ENCODE measurements at regions of chr3 and their contacts with region 1.

Region 1: GRCh38 chr3:62665598-62666437 is 209.4 kb downstream of the CADPS start:
- DNase-seq: peak; percentile 63 to 80 (median 76)
- ATAC-seq: peak; percentile 61 to 82
- H3K4me3 ChIP-seq: no peak overlapping the region
- H3K27ac ChIP-seq: peak overlapping the region; percentile 53
- H3K4me1 ChIP-seq: no peaks in the 10 kb centered on the region
- H3K27me3 ChIP-seq: no peaks in the 10 kb centered on the region

Region 2: DNA sequence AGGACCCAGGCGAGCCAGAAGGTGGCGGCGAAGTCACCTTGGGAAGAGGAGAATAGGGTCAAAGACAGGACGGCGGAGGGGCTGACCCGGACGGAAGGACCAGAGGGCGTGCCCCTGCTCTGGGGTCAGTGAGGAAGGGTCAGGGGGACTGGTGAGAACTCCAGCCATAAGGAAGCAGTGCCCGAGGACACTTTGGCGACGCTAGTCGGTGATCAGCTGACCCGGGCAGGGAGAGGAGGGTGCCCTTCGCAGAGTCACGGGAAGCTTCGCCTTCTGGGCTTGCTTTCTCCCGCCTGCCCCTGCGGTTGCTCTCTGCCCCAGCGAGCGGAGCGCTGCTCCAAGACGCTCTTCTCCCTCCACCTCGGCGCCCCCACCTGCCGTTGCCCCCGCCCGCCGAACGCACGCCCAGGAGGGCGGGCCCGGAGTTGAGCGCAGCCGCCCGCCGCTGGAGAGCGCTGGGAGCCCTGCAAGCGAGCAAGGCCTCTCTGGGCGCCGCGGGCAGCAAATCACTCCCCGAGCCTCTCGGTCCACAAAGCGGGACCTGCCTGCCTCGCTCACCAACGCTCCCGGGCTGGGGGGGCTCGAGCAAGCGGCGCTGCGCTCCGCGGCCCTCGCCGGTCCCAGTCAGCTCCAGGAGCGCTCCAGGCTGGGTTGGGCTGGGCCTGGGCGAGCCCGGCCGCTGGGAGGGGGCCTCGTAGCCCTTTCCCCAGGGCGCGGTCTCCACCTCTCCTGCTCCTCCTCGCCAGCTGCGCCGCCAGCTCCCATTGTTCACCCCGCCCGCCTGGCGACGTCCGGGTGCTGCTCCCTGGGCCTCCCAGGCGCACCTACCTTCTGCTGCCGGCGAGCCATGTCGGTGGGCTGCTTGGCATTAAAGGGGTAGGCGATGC is 208.2 kb after region 1 on chr3:
- intact Hi-C with region 1: loop called in 1 of 4 experiments (anchors 10 kb)
- DNase-seq: peak; percentile 35 to 84 (median 78)
- ATAC-seq: peak; percentile 81 to 84
- H3K4me3 ChIP-seq: peak overlapping the region; percentile 49
- H3K27ac ChIP-seq: peak overlapping the region; percentile 56
- H3K4me1 ChIP-seq: no peaks in the 10 kb centered on the region
- H3K27me3 ChIP-seq: no peaks in the 10 kb centered on the region

Region 3: GRCh38 chr3:63193629-63194028 is 527.8 kb after region 1 on chr3:
- intact Hi-C with region 1: loop called in 2 of 4 experiments (anchors 10 kb)
- DNase-seq: no peak
- ATAC-seq: no peak
- H3K4me3 ChIP-seq: no peak overlapping the region
- H3K27ac ChIP-seq: no peak overlapping the region
- H3K4me1 ChIP-seq: peaks cover 1% of the 10 kb centered on the region
- H3K27me3 ChIP-seq: no peaks in the 10 kb centered on the region

Region 4: DNA sequence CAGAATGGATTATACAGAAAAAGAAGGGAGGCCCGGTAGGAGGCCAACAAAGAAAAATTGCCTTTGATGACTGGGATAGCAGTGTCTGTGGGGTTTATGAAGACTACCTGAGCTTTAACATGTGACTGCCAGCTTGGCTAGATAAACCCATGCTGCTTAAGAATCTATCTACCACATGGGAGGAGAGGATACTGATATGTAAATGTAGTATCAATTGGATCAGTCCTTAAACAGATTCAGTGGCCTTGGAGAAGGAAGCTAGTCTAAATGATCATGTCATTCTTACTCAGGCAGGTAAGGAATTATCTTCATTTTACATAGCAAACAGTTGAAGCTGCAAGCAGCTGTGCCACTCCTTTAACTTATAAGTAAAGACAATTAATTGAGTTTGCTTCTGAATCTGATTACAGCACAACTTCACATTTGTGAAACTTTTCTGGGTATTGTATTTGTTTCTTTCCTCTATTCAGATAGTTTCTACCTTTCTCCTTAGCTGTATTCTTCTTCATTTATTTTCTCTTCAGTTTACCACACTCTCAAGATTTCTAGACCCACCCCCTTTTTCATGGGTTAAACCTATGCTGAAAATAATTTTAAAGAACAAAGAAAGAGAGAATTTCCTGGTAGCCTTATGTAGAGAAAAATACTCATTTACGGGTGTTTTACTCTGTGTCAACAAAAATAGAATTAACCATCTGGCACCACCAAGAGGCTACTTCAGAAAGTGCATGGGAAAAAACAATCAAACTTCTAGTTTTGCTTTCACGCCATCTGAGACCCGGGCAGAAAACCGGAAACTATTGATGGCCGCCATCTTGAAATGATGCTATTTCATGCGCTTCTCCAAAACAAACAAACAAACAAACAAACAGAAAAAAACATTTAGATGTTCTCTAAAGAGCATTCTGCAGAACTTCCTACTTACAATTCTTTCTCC is 562.5 kb after region 1 on chr3:
- intact Hi-C with region 1: loop called in 1 of 4 experiments (anchors 5 kb)
- DNase-seq: no peak
- ATAC-seq: peak; percentile 42 to 48
- H3K4me3 ChIP-seq: no peak overlapping the region
- H3K27ac ChIP-seq: no peak overlapping the region
- H3K4me1 ChIP-seq: no peaks in the 10 kb centered on the region
- H3K27me3 ChIP-seq: no peaks in the 10 kb centered on the region

Measured in right cardiac atrium (tissue), 5 donors.